ENCODE measurements at regions of chr3 and their contacts with region 1.

Region 1: DNA sequence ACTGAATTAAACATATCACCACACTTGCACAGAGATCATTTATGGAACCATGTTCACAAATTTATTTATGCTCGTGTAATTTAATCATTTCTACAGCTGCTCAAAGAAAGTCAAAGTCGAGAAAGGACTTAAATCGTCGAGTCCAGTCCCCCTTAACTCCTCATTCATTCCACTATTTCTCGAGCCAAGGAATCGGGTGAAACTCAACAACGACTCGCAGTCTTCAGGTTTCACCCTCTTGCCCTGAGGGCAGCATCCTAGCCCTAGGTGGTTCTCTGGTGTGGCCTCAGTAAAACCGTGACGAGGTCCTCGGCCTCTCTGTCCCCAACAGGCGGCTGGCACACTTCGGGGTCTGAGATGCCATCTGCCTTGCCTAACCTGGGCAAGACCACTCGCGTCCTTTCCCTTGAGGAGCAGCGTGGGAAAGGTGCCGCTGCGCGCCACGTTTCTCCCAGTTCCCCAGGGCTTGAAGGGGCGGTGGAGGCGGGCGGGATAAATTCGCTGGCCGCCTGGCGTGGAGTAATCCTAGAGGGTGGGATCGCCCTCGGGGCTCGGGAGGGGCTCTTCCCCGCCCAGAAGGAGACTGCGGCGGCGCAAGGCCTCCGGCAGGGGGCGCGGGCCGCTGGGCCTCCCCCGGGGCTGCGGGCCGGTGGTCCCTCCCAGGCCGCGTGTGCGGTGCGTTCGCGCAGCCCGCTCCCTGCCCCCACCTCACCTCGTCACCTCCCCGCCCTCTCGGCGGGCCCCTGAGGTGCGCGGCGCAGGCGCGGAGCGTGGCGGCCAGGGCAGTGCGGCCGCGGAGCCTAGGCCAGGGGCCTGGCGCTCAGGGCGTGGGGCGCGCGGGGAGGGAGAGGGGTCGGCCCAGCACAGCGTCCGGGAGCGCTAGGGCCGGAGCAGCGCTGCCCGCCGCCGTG is at the start of gene ZNF639:
- DNase-seq: peak; percentile 86
- H3K4me3 ChIP-seq: peak within 1 kb of the TSS; percentile 88
- CTCF ChIP-seq: peak; percentile 71

Region 2: GRCh38 chr3:179147873-179148615 is 174.5 kb before region 1 on chr3 and contains the start of gene PIK3CA:
- in situ Hi-C with region 1: loop called (anchors 25 kb)
- DNase-seq: peak; percentile 99
- H3K4me3 ChIP-seq: peak within 1 kb of the TSS; percentile 77
- CTCF ChIP-seq: no peak

Region 3: DNA sequence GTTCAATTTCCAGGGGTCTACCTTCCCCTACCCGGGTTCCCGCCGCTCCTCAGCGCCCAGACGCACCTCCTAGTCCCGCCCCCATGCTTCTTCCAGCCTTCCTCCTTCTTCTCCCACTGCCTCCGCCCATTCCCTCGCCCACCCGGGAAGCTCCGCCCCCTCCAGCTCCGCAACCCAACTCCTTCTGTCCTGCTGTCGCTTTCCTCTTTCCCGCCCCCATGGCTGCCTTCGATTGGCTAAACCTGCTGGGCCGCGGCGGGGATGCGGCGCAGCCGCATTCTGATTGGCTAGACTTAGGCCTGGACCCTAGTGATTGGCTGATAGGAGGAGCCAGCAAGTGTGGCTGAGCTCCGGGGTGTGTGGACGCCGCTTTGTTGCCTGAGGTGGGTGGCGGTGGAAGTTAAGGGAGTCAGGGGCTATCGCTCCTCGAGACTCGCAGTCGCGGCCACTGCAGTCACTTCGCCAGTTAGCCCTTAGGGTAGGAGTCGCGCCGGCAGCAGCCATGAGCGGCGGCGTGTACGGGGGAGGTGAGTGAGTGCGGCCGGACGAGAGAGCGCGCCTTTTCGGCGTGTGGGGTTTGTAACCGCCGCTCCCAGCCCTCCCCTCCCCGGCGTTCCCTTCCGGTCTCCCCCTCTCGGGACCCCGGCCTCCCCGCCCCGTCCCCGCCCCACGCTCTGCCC is 240.2 kb after region 1 on chr3 and contains the start of gene ACTL6A:
- in situ Hi-C with region 1: no loop called
- DNase-seq: peak; percentile 100
- H3K4me3 ChIP-seq: peak within 1 kb of the TSS; percentile 78
- CTCF ChIP-seq: no peak

Measured in astrocyte of the spinal cord (primary cell).